ENCODE measurements at regions of chr4 and their contacts with region 1.

Region 1: DNA sequence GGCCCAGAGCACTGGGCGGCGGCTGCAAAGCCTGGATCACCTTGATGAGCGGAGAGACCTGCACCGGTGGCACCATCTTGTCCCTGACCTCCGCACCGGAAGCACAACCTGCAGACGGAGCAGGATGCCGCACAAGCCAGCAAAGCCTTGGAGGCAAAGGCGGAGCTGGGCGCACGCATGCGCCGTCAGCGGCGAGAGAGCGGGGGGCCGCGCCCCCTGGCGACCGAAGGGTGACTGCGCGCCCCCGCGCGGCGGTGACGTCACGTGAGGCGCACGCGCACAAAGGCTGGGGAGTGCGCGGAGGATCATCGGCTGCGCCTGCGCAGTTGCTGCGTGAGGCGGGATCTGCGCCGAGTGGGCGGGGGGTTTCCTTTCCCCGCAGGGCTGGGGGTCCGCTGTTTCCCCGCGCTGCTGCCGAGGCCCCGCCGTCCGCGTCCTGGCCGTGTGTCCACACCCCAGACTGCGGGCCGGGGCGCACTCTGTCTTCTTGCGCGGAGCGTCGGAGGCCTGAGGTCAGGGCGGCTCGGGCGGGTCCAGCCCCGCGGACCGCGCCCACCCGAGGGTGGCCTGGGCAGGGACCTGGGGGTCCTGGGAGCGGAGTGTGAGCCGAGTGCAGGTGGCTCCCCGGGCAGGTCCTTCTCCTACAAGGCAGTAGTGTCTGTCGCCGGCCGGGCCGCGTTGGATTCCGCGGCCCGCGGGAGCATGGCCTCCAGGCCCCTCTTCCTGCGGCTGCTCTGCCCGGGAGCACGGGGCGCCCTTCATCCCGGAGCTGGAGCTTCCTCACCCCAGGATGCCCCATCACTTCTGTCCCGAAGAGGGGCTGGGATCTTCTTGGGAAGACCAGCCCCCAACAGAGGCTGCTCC is at the starts of genes ATP5ME and MYL5:
- DNase-seq: peak; percentile 95
- H3K4me3 ChIP-seq: peak within 1 kb of the TSS; percentile 78 to 93 (median 92)
- H3K27ac ChIP-seq: peak within 1 kb of the TSS; percentile 86
- H3K4me1 ChIP-seq: peaks cover 30% of the 10 kb centered on the region
- H3K27me3 ChIP-seq: no peaks in the 10 kb centered on the region
- CTCF ChIP-seq: peak; percentile 91 to 93
- total RNA-seq, gene ATP5ME: 38.7 to 284 TPM
- total RNA-seq, gene MYL5: 11.2 to 31.9 TPM

Region 2: DNA sequence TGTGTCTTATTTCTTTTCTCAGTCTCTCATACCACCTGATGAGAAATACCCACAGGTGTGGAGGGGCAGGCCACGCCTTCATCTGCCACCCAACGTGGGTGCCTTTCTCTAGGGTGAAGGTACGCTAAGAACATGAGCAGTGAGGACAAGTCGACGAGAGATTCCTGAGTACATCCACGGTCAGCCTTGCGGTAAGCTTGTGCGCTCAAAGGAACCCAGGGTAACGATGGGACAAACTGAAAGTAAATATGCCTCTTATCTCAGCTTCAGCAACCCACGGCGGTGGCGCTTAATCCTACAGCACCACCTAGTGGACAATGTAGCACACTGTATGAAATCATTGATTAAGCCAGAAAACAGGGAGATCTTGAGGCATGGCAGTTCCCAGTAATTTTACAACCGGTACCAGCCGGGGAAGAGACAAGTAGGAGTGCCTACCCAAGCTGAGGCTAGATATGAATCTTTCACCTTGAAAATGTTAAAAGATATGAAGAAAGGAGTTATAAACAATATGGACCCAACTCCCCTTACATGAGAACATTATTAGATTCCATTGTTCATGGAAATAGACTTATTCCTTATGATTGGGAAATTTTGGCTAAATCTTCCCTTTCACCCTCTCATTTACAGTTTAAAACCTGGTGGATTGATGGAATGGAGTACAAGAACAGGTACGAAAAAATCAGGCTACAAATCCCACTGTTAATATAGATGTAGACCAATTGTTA is 432.1 kb before region 1 on chr4:
- CTCF ChIA-PET with region 1: no interaction called
- dilution Hi-C with region 1: no loop called
- in situ Hi-C with region 1: no loop called
- intact Hi-C with region 1: loop called (anchors 1 kb)
- DNase-seq: peak; percentile 70
- H3K4me3 ChIP-seq: peak overlapping the region; percentile 22 to 47 (median 44)
- H3K27ac ChIP-seq: no peak overlapping the region
- H3K4me1 ChIP-seq: no peaks in the 10 kb centered on the region
- H3K27me3 ChIP-seq: no peaks in the 10 kb centered on the region
- CTCF ChIP-seq: peak; percentile 51 to 77

Region 3: DNA sequence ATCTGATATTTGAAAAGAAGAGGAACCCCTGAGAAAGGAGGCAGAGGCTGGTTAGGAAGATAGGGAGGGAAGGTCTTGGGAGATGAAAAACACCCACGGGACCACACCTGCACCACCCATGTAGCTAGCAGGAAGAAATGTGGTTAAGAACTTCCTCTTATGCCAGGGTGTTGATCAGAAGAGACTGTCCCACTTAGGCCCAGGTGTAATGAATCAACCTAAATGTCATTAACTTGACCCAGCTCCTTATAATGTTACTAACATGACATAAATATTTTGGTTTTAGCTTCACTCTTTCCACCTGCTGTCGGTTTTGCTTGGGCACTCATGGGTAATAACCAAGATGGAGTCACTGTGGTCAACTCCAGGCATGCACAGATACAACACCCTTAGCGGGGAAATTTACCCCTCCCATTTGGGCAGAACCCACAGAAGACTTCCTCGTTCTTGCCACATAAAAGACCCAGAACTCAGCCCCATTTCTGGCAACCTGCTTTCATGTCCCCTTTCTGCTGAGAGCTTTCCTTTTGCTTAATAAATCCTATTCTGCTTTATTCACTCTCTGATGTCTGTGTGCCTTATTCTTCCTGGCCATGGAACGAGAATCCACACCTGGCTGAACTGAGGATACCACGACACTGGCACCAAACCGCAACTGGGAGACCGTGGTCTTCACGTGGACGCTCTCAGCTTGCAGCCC is 289.9 kb before region 1 on chr4:
- CTCF ChIA-PET with region 1: no interaction called
- dilution Hi-C with region 1: no loop called
- in situ Hi-C with region 1: no loop called
- intact Hi-C with region 1: no loop called
- DNase-seq: no peak
- H3K4me3 ChIP-seq: no peak overlapping the region
- H3K27ac ChIP-seq: no peak overlapping the region
- H3K4me1 ChIP-seq: no peaks in the 10 kb centered on the region
- H3K27me3 ChIP-seq: no peaks in the 10 kb centered on the region
- CTCF ChIP-seq: no peak

Region 4: DNA sequence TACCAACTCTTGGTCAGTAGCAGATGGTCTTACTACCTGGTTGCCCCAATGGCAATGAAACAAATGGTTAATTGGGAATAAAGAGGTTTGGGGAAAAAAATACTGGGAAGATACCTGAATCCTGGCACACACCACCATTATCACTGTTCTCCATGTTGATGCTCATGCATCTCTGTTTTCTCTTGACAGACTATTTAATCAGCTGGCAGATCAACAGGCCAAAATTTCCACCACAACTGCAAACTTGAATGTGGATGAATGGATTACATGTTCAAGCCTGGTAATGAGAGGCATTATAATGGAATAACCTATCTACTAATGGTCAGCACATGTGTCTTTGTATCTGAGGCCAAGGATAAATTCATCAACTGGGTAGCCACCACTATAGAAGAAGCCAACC is 221.1 kb before region 1 on chr4:
- CTCF ChIA-PET with region 1: no interaction called
- dilution Hi-C with region 1: loop called (anchors 10 kb)
- in situ Hi-C with region 1: no loop called
- intact Hi-C with region 1: no loop called
- DNase-seq: no peak
- H3K4me3 ChIP-seq: no peak overlapping the region
- H3K27ac ChIP-seq: no peak overlapping the region
- H3K4me1 ChIP-seq: no peaks in the 10 kb centered on the region
- H3K27me3 ChIP-seq: no peaks in the 10 kb centered on the region
- CTCF ChIP-seq: no peak

Region 5: GRCh38 chr4:498328-498904 is 176.0 kb before region 1 on chr4:
- CTCF ChIA-PET with region 1: no interaction called
- dilution Hi-C with region 1: no loop called
- in situ Hi-C with region 1: no loop called
- intact Hi-C with region 1: loop called (anchors 2 kb)
- DNase-seq: no peak
- H3K4me3 ChIP-seq: peak overlapping the region; percentile 95 to 98 (median 95)
- H3K27ac ChIP-seq: peak overlapping the region; percentile 81
- H3K4me1 ChIP-seq: peaks cover 15% of the 10 kb centered on the region
- H3K27me3 ChIP-seq: no peaks in the 10 kb centered on the region
- CTCF ChIP-seq: no peak

Region 6: GRCh38 chr4:537436-538264 is 136.8 kb before region 1 on chr4:
- CTCF ChIA-PET with region 1: no interaction called
- dilution Hi-C with region 1: loop called (anchors 5 kb)
- in situ Hi-C with region 1: no loop called
- intact Hi-C with region 1: no loop called
- DNase-seq: no peak
- H3K4me3 ChIP-seq: no peak overlapping the region
- H3K27ac ChIP-seq: no peak overlapping the region
- H3K4me1 ChIP-seq: no peaks in the 10 kb centered on the region
- H3K27me3 ChIP-seq: no peaks in the 10 kb centered on the region
- CTCF ChIP-seq: no peak

Region 7: DNA sequence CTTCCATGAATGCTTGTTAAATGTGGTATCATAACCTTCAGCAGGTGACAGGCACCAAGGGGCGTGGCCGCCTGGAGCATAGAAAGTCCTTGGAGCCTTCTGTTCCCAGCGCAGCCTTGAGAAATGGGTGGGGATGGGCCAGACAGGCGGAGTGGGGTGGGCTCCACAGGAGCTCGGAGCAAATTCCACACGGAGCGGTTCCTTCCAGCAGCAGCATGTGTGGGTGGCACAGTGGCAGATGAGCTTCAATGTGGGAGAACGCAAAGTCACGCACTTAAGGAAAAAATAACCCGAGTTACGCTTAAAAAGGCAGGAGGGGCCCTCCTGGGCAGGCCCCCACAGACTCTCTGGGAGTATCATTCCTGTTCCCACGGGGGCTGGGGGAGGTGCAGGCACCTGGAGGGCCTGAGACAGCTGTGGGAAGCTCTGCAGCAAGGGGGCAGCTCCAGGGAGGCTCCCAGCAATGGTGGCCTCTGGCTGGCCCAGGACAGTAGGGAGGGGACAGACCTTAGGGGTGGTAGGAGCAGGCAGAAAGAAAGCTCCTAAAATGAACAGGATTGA is 113.6 kb before region 1 on chr4:
- CTCF ChIA-PET with region 1: no interaction called
- dilution Hi-C with region 1: no loop called
- in situ Hi-C with region 1: no loop called
- intact Hi-C with region 1: no loop called
- DNase-seq: no peak
- H3K4me3 ChIP-seq: no peak overlapping the region
- H3K27ac ChIP-seq: no peak overlapping the region
- H3K4me1 ChIP-seq: no peaks in the 10 kb centered on the region
- H3K27me3 ChIP-seq: no peaks in the 10 kb centered on the region
- CTCF ChIP-seq: no peak

Region 8: GRCh38 chr4:602559-602942 is 71.9 kb before region 1 on chr4:
- CTCF ChIA-PET with region 1: no interaction called
- dilution Hi-C with region 1: no loop called
- in situ Hi-C with region 1: no loop called
- intact Hi-C with region 1: loop called (anchors 1 kb)
- DNase-seq: peak; percentile 60
- H3K4me3 ChIP-seq: no peak overlapping the region
- H3K27ac ChIP-seq: no peak overlapping the region
- H3K4me1 ChIP-seq: no peaks in the 10 kb centered on the region
- H3K27me3 ChIP-seq: no peaks in the 10 kb centered on the region
- CTCF ChIP-seq: peak; percentile 82 to 90

Region 9: DNA sequence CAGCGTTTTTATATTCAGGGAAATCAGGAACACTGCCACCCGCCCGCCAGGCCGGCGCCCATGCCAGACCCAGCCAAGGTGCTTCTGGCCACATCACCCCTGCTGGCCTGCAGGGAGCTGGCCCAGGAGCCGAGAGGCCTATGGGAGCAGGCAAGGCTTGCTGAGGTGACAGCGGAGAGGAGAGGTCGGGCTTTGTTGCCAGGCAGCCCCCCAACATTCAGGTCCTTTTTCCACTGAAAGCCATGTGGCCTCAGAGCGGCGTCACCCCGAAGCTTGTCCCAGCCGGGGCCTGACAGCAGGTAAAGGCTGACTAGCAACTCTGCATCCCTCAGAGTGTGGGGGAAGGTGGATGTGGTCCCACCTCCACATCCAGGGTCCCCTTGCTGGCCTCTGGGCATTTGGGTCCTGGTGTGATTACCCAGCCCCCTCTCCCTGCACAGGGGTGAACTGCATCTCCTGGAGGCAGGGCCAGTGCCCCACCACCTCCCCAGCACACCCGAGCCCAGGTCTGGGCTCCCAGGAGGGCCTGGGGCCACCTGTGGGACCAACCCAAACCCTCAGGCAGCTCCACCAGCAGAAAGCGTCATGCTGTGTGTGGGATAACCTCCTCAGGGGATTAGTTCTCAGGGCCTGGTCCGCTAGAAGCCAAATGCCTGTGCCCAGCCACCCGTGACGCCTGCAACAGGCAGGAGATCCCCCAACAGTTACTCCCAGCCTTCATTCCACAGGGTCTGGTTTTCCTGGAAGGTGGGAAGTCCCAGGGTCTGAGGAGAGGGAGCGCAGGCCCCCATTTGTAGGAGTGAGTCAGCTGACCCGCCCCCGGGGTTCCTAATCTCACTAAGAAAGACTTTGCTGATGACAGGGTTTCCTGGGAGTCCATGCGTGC is 49.5 kb before region 1 on chr4 and contains the start of gene PDE6B:
- CTCF ChIA-PET with region 1: no interaction called
- dilution Hi-C with region 1: loop called (anchors 5 kb)
- in situ Hi-C with region 1: no loop called
- intact Hi-C with region 1: no loop called
- DNase-seq: no peak
- H3K4me3 ChIP-seq: no peak within 1 kb of the TSS
- H3K27ac ChIP-seq: no peak within 1 kb of the TSS
- H3K4me1 ChIP-seq: no peaks in the 10 kb centered on the region
- H3K27me3 ChIP-seq: no peaks in the 10 kb centered on the region
- CTCF ChIP-seq: no peak
- total RNA-seq, gene PDE6B: 3.2 TPM in 1 of 2 donors, not detected in the other